ENCODE measurements at regions of chr17 and their contacts with region 1.

Region 1: GRCh38 chr17:40157973-40158372 is 17.6 kb downstream of the CASC3 start:
- DNase-seq: no peak
- H3K4me3 ChIP-seq: no peak overlapping the region
- H3K27ac ChIP-seq: peak overlapping the region; percentile 40 to 67
- H3K4me1 ChIP-seq: no peaks in the 10 kb centered on the region
- H3K27me3 ChIP-seq: no peaks in the 10 kb centered on the region
- CTCF ChIP-seq: no peak
- POLR2A ChIP-seq: no peak

Region 2: DNA sequence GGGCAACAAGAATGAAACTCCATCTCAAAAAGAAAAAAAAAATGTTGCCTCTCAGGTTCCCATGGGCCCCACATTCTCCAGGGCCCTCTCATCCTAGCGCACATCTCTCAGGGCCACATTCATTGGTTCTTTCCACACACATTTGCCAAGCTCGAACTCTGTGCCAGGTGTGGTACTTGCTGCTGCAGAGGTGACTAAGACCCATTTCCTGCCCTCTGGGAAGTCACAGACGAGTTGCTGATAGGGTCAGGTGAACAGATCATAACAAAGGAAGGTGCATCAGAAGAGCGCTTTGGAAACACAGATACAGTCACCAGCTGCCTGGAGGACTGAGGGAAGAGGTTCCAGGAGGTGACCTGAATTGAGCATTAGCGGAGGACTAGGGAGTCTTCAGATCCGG is 194.1 kb before region 1 on chr17:
- intact Hi-C with region 1: no loop called
- DNase-seq: no peak
- H3K4me3 ChIP-seq: no peak overlapping the region
- H3K27ac ChIP-seq: no peak overlapping the region
- H3K4me1 ChIP-seq: no peaks in the 10 kb centered on the region
- H3K27me3 ChIP-seq: no peaks in the 10 kb centered on the region
- CTCF ChIP-seq: no peak
- POLR2A ChIP-seq: no peak

Region 3: GRCh38 chr17:40121181-40122135 is 36.5 kb before region 1 on chr17 and contains the start of gene MSL1:
- intact Hi-C with region 1: loop called (anchors 1 kb)
- DNase-seq: peak; percentile 88 to 90
- H3K4me3 ChIP-seq: peak within 1 kb of the TSS; percentile 81 to 100 (median 85)
- H3K27ac ChIP-seq: peak within 1 kb of the TSS; percentile 95 to 100
- H3K4me1 ChIP-seq: peaks cover 0 to 9% of the 10 kb centered on the region in 2 donors
- H3K27me3 ChIP-seq: no peaks in the 10 kb centered on the region
- CTCF ChIP-seq: no peak
- POLR2A ChIP-seq: no peak
- total RNA-seq, gene MSL1: 49.3 to 79.3 (median 78.2) TPM

Region 4: GRCh38 chr17:40516581-40517285 is 358.8 kb after region 1 on chr17:
- intact Hi-C with region 1: no loop called
- DNase-seq: peak in 1 of 2 donors; percentile 43
- H3K4me3 ChIP-seq: no peak overlapping the region
- H3K27ac ChIP-seq: no peak overlapping the region
- H3K4me1 ChIP-seq: peaks cover 2 to 8% of the 10 kb centered on the region in 2 donors
- H3K27me3 ChIP-seq: no peaks in the 10 kb centered on the region
- CTCF ChIP-seq: no peak
- POLR2A ChIP-seq: no peak